ENCODE measurements at regions of chr5 and their contacts with region 1.

Region 1: GRCh38 chr5:98827161-98827560 is 53.7 kb downstream of the RGMB start:
- DNase-seq: peak; percentile 20
- H3K4me3 ChIP-seq: no peak overlapping the region
- H3K27ac ChIP-seq: no peak overlapping the region
- H3K4me1 ChIP-seq: no peaks in the 10 kb centered on the region
- H3K27me3 ChIP-seq: no peaks in the 10 kb centered on the region
- CTCF ChIP-seq: peak; percentile 38 to 52

Region 2: GRCh38 chr5:97231025-97231636 is 1596.0 kb before region 1 on chr5:
- CTCF ChIA-PET with region 1: no interaction called
- dilution Hi-C with region 1: no loop called
- in situ Hi-C with region 1: no loop called
- intact Hi-C with region 1: loop called (anchors 5 kb)
- DNase-seq: peak; percentile 58
- H3K4me3 ChIP-seq: no peak overlapping the region
- H3K27ac ChIP-seq: no peak overlapping the region
- H3K4me1 ChIP-seq: no peaks in the 10 kb centered on the region
- H3K27me3 ChIP-seq: no peaks in the 10 kb centered on the region
- CTCF ChIP-seq: peak; percentile 81 to 84

Region 3: GRCh38 chr5:97297063-97297703 is 1530.0 kb before region 1 on chr5:
- CTCF ChIA-PET with region 1: no interaction called
- dilution Hi-C with region 1: no loop called
- in situ Hi-C with region 1: no loop called
- intact Hi-C with region 1: loop called (anchors 5 kb)
- DNase-seq: peak; percentile 6
- H3K4me3 ChIP-seq: no peak overlapping the region
- H3K27ac ChIP-seq: no peak overlapping the region
- H3K4me1 ChIP-seq: no peaks in the 10 kb centered on the region
- H3K27me3 ChIP-seq: no peaks in the 10 kb centered on the region
- CTCF ChIP-seq: peak; percentile 27 to 45

Region 4: GRCh38 chr5:97534166-97534565 is 1293.0 kb before region 1 on chr5:
- CTCF ChIA-PET with region 1: interaction called, 3 read pairs
- dilution Hi-C with region 1: no loop called
- in situ Hi-C with region 1: no loop called
- intact Hi-C with region 1: loop called (anchors 5 kb)
- DNase-seq: peak; percentile 85
- H3K4me3 ChIP-seq: no peak overlapping the region
- H3K27ac ChIP-seq: no peak overlapping the region
- H3K4me1 ChIP-seq: no peaks in the 10 kb centered on the region
- H3K27me3 ChIP-seq: no peaks in the 10 kb centered on the region
- CTCF ChIP-seq: peak; percentile 64 to 72

Region 5: DNA sequence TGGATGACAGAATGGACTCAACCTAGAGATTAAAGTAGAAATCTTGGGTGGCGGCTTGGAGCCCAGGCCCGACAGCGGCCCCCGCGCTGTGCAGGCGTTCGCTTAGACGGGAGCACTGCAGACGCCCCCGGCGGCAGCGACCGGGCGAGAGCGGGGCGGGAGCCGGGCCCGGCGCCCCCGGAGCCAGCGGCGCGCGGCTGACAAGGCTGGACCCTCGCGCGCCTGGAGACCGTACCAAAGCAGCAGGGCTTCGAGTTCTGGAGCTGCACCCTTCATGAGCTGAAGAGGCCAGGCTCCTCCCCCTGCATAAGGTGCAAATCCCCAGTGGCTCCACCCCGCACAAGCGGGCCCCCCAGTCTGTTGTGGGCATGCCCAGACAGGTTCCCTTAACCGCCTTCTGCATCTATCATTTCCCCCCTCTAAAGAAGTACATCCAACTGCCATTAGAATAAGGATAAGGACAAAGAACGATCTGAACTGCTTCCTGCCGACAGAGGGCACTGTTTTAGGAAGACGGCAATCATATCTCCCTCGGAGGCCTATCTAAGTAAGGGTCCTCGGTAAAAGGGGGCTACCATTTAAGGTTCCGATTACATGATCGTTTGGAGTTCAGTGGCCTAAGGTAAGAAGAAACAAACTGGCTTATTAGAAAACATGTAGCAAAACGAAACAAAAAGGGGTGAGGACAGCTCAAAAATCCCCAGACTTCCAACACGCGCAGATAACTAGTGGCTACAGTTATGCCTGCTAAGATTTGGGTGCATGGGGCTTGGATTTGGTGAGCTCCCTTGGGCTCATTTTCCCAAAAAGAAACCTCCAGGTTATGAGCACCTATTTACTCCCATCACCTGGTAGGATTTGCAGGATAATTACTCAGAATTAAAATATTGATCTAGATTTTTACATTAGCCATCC is 12.6 kb after region 1 on chr5:
- CTCF ChIA-PET with region 1: no interaction called
- dilution Hi-C with region 1: no loop called
- in situ Hi-C with region 1: no loop called
- intact Hi-C with region 1: no loop called
- DNase-seq: no peak
- H3K4me3 ChIP-seq: no peak overlapping the region
- H3K27ac ChIP-seq: no peak overlapping the region
- H3K4me1 ChIP-seq: no peaks in the 10 kb centered on the region
- H3K27me3 ChIP-seq: no peaks in the 10 kb centered on the region
- CTCF ChIP-seq: peak; percentile 21 to 36